Activated CD8-positive, alpha-beta T cell treated with anti-CD3 and anti-CD28 coated beads, Interleukin-2, amount 10 ng/mL, durations not matched to agents 7 days and 5 days (primary cell): ENCODE measurements at regions of chr17 and their contacts with region 1.

Region 1: GRCh38 chr17:28661635-28662537 is at the starts of genes SDF2 and SUPT6H:
- DNase-seq: peak; percentile 96
- ATAC-seq: peak; percentile 90
- H3K4me3 Mint-ChIP-seq: peak within 1 kb of the TSS; percentile 99
- H3K27ac Mint-ChIP-seq: peak within 1 kb of the TSS; percentile 100
- H3K4me1 Mint-ChIP-seq: peaks cover 36% of the 10 kb centered on the region
- H3K27me3 Mint-ChIP-seq: no peaks in the 10 kb centered on the region
- total RNA-seq, gene SDF2: 51.7 to 54.5 TPM
- total RNA-seq, gene SUPT6H: 69.4 to 72.8 TPM

Region 2: DNA sequence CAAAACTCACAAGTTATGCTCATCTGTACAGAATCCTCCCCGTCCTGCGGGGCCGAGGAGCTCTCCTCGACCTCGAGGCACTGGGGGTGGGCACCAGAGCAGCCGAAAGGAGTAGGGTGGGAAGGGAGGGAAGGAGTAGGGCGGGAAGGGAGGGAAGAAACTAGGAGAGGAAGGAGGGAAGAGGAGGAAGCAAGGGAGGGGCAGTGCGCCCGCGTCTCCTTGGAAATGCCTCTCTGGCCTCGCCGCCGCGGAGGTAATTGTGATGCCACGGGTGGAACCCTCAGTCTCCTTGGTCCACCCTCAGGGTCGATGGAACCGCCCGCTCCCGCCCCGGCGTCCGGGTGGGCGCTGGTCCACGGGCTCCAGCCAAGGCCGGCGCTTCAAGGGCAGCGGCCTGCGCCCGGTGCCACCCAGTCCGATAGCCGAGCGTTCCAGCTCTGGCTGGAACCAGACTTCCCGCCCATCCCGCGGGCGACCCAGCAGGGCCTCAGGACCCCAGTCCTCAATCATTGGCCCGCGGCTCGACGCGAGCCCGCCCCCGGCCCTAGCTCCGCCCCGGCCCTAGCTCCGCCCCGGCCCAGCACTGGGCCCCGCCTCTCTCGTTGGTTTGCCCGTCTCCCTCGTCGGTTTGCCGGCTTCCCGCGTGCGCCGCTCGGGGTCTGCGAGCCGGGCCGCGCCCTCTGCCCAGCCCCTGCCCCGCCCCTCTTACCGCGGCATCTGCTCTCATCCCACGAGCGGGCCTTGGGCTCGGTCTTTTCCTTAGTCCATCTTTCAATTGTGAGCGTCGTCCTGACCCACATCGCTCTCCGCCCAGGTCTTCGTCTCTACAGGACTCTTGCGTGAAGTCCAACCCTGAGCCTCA is 49.2 kb after region 1 on chr17:
- CTCF ChIA-PET with region 1: no interaction called
- POLR2A ChIA-PET with region 1: interaction called, 17 read pairs
- DNase-seq: peak; percentile 91
- ATAC-seq: peak; percentile 91
- H3K4me3 Mint-ChIP-seq: peak overlapping the region; percentile 86
- H3K27ac Mint-ChIP-seq: peak overlapping the region; percentile 98
- H3K4me1 Mint-ChIP-seq: peaks cover 20% of the 10 kb centered on the region
- H3K27me3 Mint-ChIP-seq: peaks cover 9% of the 10 kb centered on the region